PC-3 (cell line): ENCODE measurements at regions of chr15 and their contacts with region 1.

Region 1: GRCh38 chr15:81480645-81481053 is 106.6 kb upstream of the TMC3 start:
- DNase-seq: peak; percentile 79
- ATAC-seq: no peak
- H3K4me3 ChIP-seq: no peak overlapping the region
- H3K27ac ChIP-seq: no peak overlapping the region
- H3K4me1 ChIP-seq: no peaks in the 10 kb centered on the region
- H3K27me3 ChIP-seq: peaks cover 15% of the 10 kb centered on the region; the same call in 1 of the 2 replicates
- CTCF ChIP-seq: peak; percentile 85

Region 2: GRCh38 chr15:81492331-81492963 is 11.8 kb after region 1 on chr15:
- CTCF ChIA-PET with region 1: no interaction called
- POLR2A ChIA-PET with region 1: no interaction called
- intact Hi-C with region 1: no loop called
- DNase-seq: peak; percentile 6
- ATAC-seq: no peak; the same call in 1 of the 2 replicates
- H3K4me3 ChIP-seq: no peak overlapping the region
- H3K27ac ChIP-seq: no peak overlapping the region
- H3K4me1 ChIP-seq: no peaks in the 10 kb centered on the region
- H3K27me3 ChIP-seq: peaks cover 41% of the 10 kb centered on the region
- CTCF ChIP-seq: no peak

Region 3: DNA sequence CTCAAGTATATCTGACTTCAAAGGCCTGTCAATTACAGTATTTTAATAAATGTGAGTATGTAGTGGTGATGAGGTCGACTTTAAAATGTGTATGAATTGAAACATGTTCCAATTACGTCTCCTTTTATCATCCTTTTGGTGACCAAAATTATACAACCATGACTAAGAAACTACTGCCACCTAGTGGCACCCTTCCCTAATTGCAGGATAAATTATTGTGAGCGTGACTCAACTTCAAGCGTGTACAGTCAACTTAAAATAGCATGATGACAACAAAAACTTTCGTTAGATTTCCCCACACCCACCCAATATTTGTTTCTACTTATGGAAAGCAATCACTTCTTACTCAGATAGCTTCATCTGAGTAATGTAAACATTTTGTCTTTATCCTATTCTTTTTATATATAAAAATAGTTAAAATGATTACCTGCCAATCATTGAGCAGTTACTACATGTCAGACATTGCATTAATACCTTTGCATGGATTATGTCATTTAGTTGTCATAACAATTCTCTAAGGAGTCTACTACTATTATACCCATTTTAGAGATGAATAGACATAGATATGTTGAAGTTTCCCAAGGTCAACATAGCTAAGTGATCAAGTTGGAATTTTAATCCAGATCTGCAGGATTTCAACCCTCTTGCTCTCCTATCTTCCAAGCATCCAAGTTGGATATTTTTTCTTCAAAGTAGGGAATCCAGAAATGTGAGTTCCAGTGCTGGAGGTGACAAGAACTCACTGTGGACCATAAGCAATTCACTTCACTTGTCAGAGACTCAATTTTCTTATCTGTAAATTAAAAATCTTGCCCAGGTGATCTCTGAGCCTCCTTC is 459.2 kb after region 1 on chr15:
- CTCF ChIA-PET with region 1: no interaction called
- POLR2A ChIA-PET with region 1: no interaction called
- intact Hi-C with region 1: loop called (anchors 2 kb)
- DNase-seq: peak; percentile 84
- ATAC-seq: 0 out of 2 replicates have a peak, but pooled peaks have one; percentile 27
- H3K4me3 ChIP-seq: no peak overlapping the region
- H3K27ac ChIP-seq: no peak overlapping the region
- H3K4me1 ChIP-seq: no peaks in the 10 kb centered on the region
- H3K27me3 ChIP-seq: peaks cover 5% of the 10 kb centered on the region; the same call in 1 of the 2 replicates
- CTCF ChIP-seq: peak; percentile 84

Region 4: GRCh38 chr15:82046666-82047452 is 566.2 kb after region 1 on chr15:
- CTCF ChIA-PET with region 1: no interaction called
- POLR2A ChIA-PET with region 1: no interaction called
- intact Hi-C with region 1: loop called (anchors 5 kb)
- DNase-seq: peak; percentile 93
- ATAC-seq: peak; percentile 60
- H3K4me3 ChIP-seq: peak overlapping the region; percentile 95
- H3K27ac ChIP-seq: no peak overlapping the region
- H3K4me1 ChIP-seq: no peaks in the 10 kb centered on the region
- H3K27me3 ChIP-seq: peaks cover 34% of the 10 kb centered on the region
- CTCF ChIP-seq: peak; percentile 55

Region 5: GRCh38 chr15:82103468-82103867 is 622.8 kb after region 1 on chr15:
- CTCF ChIA-PET with region 1: no interaction called
- POLR2A ChIA-PET with region 1: no interaction called
- intact Hi-C with region 1: loop called (anchors 5 kb)
- DNase-seq: no peak
- ATAC-seq: 0 out of 2 replicates have a peak, but pooled peaks have one; percentile 38
- H3K4me3 ChIP-seq: no peak overlapping the region
- H3K27ac ChIP-seq: no peak overlapping the region
- H3K4me1 ChIP-seq: peaks cover 6% of the 10 kb centered on the region; the same call in 1 of the 2 replicates
- H3K27me3 ChIP-seq: no peaks in the 10 kb centered on the region
- CTCF ChIP-seq: peak; percentile 50

Region 6: GRCh38 chr15:82197733-82198594 is 717.3 kb after region 1 on chr15:
- CTCF ChIA-PET with region 1: no interaction called
- POLR2A ChIA-PET with region 1: no interaction called
- intact Hi-C with region 1: loop called (anchors 10 kb)
- DNase-seq: peak; percentile 81
- ATAC-seq: peak; percentile 96
- H3K4me3 ChIP-seq: no peak overlapping the region
- H3K27ac ChIP-seq: no peak overlapping the region
- H3K4me1 ChIP-seq: no peaks in the 10 kb centered on the region
- H3K27me3 ChIP-seq: no peaks in the 10 kb centered on the region
- CTCF ChIP-seq: peak; percentile 80